MCF 10A (cell line): ENCODE measurements at regions of chr3 and their contacts with region 1.

Region 1: DNA sequence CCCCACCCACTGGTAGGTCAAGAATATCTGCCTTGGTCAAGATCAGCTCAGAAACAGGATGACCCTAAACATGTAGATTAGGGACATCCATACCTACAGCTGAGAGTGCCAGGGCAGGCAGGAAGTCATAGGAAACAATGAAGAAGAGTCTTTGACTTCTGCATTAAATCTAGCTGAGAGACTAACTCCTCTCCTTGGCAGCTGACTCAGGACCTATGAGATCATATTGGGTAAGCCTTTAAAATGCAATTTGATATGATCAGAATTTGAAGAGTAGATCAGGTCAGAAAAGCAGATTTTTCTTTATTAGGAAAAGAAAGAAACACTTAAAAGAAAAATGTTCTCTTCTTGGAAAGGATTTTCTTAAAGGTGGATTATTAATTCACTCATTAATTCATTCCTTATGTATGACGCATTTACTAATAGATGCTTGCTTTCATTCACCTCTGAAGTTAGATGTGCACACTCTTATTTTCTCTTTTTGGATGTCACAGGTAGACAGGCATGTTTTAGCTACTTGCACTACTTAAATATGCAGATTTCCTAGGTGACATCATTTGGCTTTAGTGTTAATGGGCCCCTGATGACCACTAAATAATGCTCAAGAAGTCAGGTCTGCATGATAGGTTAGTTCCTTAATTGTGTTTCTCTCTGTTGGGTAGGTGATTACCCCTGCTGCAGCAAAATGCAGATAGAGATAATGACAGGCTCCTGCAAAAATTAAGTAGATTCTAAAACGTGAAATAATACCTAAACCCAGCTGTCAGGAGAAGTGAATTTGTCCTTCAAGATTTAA is 35.7 kb upstream of the GSK3B start:
- DNase-seq: no peak
- H3K4me3 Mint-ChIP-seq: no peak overlapping the region
- H3K27ac Mint-ChIP-seq: no peak overlapping the region
- H3K4me1 Mint-ChIP-seq: no peaks in the 10 kb centered on the region
- H3K27me3 Mint-ChIP-seq: no peaks in the 10 kb centered on the region
- CTCF ChIP-seq: no peak

Region 2: DNA sequence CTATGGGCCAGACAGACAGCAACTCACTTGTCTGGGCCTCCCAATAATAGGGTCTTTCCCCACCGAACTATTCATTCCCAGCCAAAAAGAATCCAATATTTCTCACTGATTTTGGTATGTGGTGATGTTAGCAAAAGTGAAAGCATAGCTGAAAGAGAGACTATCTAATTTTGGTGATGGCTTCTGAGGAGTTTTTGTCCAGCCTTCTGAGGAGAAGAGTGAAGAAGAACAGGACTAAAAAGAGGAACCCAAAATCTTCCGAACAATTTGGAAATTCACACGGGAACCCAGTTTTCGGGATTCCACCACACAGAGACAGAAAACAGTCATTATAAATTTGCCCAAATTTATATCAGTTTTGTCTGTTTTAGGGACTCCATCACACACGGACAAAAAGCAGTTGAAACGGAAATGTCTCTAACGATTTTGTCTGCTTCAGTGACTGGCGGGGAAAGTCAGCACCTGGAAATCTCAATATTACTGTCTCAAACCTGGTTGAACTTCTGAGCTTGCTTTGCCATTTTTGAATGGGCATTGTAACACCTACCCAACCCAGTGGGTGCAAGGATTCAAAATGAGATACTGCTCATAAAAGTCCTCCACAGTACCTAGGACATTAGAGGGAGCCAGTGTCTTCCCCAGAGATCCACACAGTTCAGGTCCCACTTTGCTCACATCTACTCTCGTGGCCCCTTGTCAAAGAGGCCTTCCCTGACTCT is 579.6 kb before region 1 on chr3:
- CTCF ChIA-PET with region 1: no interaction called
- POLR2A ChIA-PET with region 1: no interaction called
- intact Hi-C with region 1: no loop called
- DNase-seq: no peak
- H3K4me3 Mint-ChIP-seq: no peak overlapping the region
- H3K27ac Mint-ChIP-seq: no peak overlapping the region
- H3K4me1 Mint-ChIP-seq: no peaks in the 10 kb centered on the region
- H3K27me3 Mint-ChIP-seq: no peaks in the 10 kb centered on the region
- CTCF ChIP-seq: no peak

Region 3: GRCh38 chr3:120113128-120114116 is 16.5 kb before region 1 on chr3:
- CTCF ChIA-PET with region 1: interaction called, 3 read pairs
- POLR2A ChIA-PET with region 1: interaction called, 11 read pairs
- intact Hi-C with region 1: no loop called
- DNase-seq: peak; percentile 91
- H3K4me3 Mint-ChIP-seq: no peak overlapping the region
- H3K27ac Mint-ChIP-seq: peak overlapping the region; percentile 73
- H3K4me1 Mint-ChIP-seq: peaks cover 51% of the 10 kb centered on the region
- H3K27me3 Mint-ChIP-seq: no peaks in the 10 kb centered on the region
- CTCF ChIP-seq: no peak